ENCODE measurements at regions of chr16 and their contacts with region 1.

Region 1: DNA sequence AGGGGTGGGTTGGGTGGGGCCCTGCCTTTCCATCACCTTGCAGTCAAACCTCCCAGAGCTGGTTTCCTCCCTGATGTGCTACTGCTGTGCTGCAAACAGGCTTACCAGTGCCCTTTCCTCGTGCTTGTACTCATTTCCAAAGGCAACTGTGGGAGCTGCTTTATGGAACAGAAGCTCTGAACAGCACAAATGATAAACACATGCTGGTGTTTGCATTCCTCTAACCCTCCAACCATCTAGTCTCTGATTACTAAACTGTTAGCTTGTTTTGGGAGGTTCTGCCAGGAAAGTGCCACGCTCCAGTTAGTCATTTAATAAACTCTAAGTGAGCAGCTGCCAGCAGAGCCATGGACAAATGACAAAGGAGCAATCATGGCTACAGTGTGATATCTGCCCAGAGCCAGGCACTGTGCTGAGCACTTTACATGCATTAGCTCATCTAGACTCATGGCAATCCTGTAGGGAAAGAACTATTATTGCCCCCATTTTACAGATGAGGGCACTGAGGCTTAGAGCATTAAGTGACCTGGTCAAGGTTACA is 110.4 kb downstream of the VAT1L start:
- DNase-seq: peak; percentile 81
- H3K4me3 ChIP-seq: no peak overlapping the region
- H3K27ac ChIP-seq: peak overlapping the region; percentile 86
- H3K27me3 ChIP-seq: no peaks in the 10 kb centered on the region
- CTCF ChIP-seq: no peak

Region 2: GRCh38 chr16:77833921-77834634 is 64.7 kb before region 1 on chr16:
- CTCF ChIA-PET with region 1: no interaction called
- POLR2A ChIA-PET with region 1: interaction called, 12 read pairs
- DNase-seq: peak; percentile 54
- H3K4me3 ChIP-seq: no peak overlapping the region
- H3K27ac ChIP-seq: peak overlapping the region; percentile 98
- H3K27me3 ChIP-seq: no peaks in the 10 kb centered on the region
- CTCF ChIP-seq: no peak

Region 3: GRCh38 chr16:77840673-77841501 is 57.9 kb before region 1 on chr16:
- CTCF ChIA-PET with region 1: no interaction called
- POLR2A ChIA-PET with region 1: interaction called, 13 read pairs
- DNase-seq: peak; percentile 91
- H3K4me3 ChIP-seq: no peak overlapping the region
- H3K27ac ChIP-seq: peak overlapping the region; percentile 53
- H3K27me3 ChIP-seq: no peaks in the 10 kb centered on the region
- CTCF ChIP-seq: no peak

Region 4: DNA sequence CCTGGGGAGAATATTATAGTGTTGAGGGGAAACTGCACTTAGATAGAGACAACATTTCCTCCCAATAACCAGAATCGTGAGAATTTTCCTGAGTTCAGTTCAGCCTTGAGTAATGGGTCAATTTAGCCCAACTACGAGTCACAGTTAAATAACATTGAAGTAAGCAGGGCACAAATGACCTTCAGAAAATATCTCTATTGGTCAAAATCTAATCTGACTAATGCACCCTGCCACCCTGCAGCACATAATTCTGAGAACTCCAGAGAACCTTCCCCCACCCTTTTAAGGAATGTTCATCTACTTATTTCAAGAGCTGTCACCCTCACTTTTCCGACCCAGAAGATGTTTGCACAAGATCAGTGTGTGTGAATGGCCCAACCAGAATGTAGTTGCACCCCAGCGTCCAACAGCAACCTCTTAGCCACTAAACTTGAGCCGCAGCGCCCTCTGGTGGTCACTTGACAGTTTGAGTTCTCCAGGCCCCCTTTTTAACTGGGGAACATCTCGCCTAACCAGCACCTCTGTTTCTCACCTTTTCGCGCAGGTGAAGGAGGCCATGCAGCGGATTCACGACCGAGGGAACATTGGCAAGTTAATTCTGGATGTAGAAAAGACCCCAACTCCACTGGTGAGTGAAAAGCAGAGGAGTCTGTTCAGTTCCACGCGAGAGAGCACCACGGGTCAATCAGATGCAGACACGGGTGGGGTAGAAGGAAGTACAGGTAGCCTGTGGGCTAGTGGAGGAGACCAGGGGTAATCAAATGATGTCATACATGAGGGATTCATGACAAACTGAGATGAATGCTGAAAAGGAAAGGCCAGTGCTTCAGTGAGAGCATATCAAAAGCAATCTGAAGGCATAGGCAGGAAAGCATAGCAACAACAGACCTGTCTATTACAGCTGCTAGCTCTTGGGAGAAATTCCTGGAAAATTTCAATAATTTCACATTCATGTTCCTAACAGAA is 72.8 kb after region 1 on chr16:
- CTCF ChIA-PET with region 1: no interaction called
- POLR2A ChIA-PET with region 1: no interaction called
- DNase-seq: peak; percentile 59
- H3K4me3 ChIP-seq: no peak overlapping the region
- H3K27ac ChIP-seq: peak overlapping the region; percentile 21
- H3K27me3 ChIP-seq: no peaks in the 10 kb centered on the region
- CTCF ChIP-seq: peak; percentile 86

Region 5: DNA sequence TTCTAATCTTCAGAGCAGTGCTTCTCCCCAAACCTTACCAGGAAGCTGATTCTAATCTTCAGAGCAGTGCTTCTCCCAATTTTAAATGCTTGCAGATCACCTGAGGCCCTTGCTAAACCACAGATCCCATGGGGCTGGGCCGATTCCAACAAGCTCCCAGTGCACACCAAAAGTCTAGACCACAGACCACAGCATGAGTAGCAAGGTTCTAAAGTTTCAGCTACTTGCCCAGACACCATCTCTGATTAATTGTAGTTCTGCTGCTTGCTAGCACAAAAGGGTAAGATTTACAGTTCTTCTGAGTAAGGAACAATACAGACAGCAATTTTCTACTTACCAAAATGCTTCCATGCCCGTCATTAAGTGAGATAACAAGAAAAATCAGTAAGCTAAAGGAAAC is 135.8 kb after region 1 on chr16:
- CTCF ChIA-PET with region 1: no interaction called
- POLR2A ChIA-PET with region 1: no interaction called
- DNase-seq: no peak
- H3K4me3 ChIP-seq: no peak overlapping the region
- H3K27ac ChIP-seq: no peak overlapping the region
- H3K27me3 ChIP-seq: no peaks in the 10 kb centered on the region
- CTCF ChIP-seq: no peak